CD14-positive monocyte (primary cell): ENCODE measurements at regions of chr7 and their contacts with region 1.

Region 1: GRCh38 chr7:155205368-155206317 is 92.0 kb upstream of the INSIG1 start:
- DNase-seq: peak; percentile 97 to 100 (median 98)
- H3K4me3 ChIP-seq: peak overlapping the region; percentile 30 to 64 (median 31)
- H3K4me3 Mint-ChIP-seq: peak overlapping the region; percentile 74 to 94
- H3K27ac ChIP-seq: peak overlapping the region; percentile 86 to 100
- H3K27ac Mint-ChIP-seq: peak overlapping the region; percentile 100
- H3K4me1 ChIP-seq: peaks cover 22 to 23% of the 10 kb centered on the region in 2 donors
- H3K4me1 Mint-ChIP-seq: peaks cover 22% of the 10 kb centered on the region
- H3K27me3 ChIP-seq: no peaks in the 10 kb centered on the region
- H3K27me3 Mint-ChIP-seq: peaks cover 0 to 9% (median 0%) of the 10 kb centered on the region in 3 donors
- CTCF ChIP-seq: no peak

Region 2: GRCh38 chr7:155003376-155004214 is 202.0 kb before region 1 on chr7:
- intact Hi-C with region 1: loop called in 1 of 2 experiments (anchors 10 kb)
- DNase-seq: peak; percentile 73 to 79 (median 78)
- H3K4me3 ChIP-seq: peak overlapping the region; percentile 68 to 92 (median 74)
- H3K4me3 Mint-ChIP-seq: peak overlapping the region; percentile 89 to 95
- H3K27ac ChIP-seq: peak overlapping the region in 1 of 2 donors; percentile 83
- H3K27ac Mint-ChIP-seq: peak overlapping the region; percentile 15 to 84 (median 63)
- H3K4me1 ChIP-seq: peaks cover 16 to 18% of the 10 kb centered on the region in 2 donors
- H3K4me1 Mint-ChIP-seq: peaks cover 19% of the 10 kb centered on the region
- H3K27me3 ChIP-seq: no peaks in the 10 kb centered on the region
- H3K27me3 Mint-ChIP-seq: peaks cover 0 to 2% (median 1%) of the 10 kb centered on the region in 3 donors
- CTCF ChIP-seq: no peak

Region 3: GRCh38 chr7:155257482-155258225 is 52.0 kb after region 1 on chr7:
- intact Hi-C with region 1: no loop called
- DNase-seq: no peak
- H3K4me3 ChIP-seq: no peak overlapping the region
- H3K4me3 Mint-ChIP-seq: no peak overlapping the region
- H3K27ac ChIP-seq: no peak overlapping the region
- H3K27ac Mint-ChIP-seq: no peak overlapping the region
- H3K4me1 ChIP-seq: peaks cover 0 to 6% of the 10 kb centered on the region in 2 donors
- H3K4me1 Mint-ChIP-seq: peaks cover 9% of the 10 kb centered on the region
- H3K27me3 ChIP-seq: no peaks in the 10 kb centered on the region
- H3K27me3 Mint-ChIP-seq: peaks cover 0 to 3% (median 0%) of the 10 kb centered on the region in 3 donors
- CTCF ChIP-seq: no peak

Region 4: DNA sequence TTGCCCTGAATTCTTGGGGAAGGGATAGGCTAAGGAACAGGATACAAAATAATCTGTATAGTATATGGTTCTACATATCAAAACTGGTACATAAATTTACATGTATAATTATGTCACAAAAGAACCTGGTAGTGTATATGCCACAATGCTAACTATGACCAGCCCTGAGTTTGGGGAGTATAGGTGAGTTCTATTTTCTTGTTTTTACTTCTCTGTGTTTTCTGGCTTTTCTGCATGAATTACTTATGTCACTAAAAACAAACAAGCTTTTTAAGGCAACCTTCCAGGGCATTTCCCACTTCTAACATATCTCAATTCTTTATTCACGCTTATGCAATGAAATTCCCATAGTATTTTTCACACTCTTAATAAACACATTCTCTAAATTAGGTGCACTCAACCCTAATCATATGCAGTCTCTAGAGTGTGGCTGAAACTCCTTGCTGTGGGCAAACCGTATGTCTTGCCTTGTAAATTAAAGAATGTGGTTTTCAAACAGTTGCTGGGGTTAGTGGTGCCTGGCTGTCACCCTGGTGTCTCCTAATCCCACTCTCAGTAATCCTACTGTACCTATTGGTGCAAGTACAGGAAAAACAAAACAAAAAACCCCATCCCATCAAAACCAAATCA is 78.0 kb after region 1 on chr7:
- intact Hi-C with region 1: loop called in 1 of 2 experiments (anchors 5 kb)
- DNase-seq: no peak
- H3K4me3 ChIP-seq: no peak overlapping the region
- H3K4me3 Mint-ChIP-seq: no peak overlapping the region
- H3K27ac ChIP-seq: no peak overlapping the region
- H3K27ac Mint-ChIP-seq: peak overlapping the region in 4 of 7 donors; percentile 30 to 85 (median 66)
- H3K4me1 ChIP-seq: peaks cover 30 to 32% of the 10 kb centered on the region in 2 donors
- H3K4me1 Mint-ChIP-seq: peaks cover 53% of the 10 kb centered on the region
- H3K27me3 ChIP-seq: no peaks in the 10 kb centered on the region
- H3K27me3 Mint-ChIP-seq: peaks cover 6 to 13% (median 11%) of the 10 kb centered on the region in 3 donors
- CTCF ChIP-seq: no peak

Region 5: DNA sequence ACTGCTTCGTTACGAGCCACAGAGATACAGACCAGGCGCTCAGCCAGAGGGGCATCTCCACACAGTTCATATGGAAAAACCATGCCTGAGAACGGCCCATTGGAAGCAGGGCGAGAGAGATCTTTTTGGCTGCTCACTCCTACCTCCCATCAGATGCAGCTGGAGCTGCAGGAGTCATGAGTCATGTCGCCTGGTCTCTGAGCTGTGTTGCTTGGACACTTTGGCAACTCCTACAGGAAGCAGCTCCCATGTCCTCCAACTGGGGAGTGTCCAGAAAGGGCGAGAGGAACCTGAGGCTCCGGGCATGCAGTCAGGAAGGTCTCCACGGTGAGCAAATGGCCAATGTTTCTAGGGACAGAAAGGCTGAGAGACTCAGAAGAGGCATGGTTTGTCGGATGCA is 116.9 kb after region 1 on chr7:
- intact Hi-C with region 1: no loop called
- DNase-seq: no peak
- H3K4me3 ChIP-seq: no peak overlapping the region
- H3K4me3 Mint-ChIP-seq: no peak overlapping the region
- H3K27ac ChIP-seq: no peak overlapping the region
- H3K27ac Mint-ChIP-seq: no peak overlapping the region
- H3K4me1 ChIP-seq: no peaks in the 10 kb centered on the region
- H3K4me1 Mint-ChIP-seq: no peaks in the 10 kb centered on the region
- H3K27me3 ChIP-seq: no peaks in the 10 kb centered on the region
- H3K27me3 Mint-ChIP-seq: peaks cover 0 to 14% (median 8%) of the 10 kb centered on the region in 3 donors
- CTCF ChIP-seq: no peak

Region 6: GRCh38 chr7:155356323-155357105 is 150.9 kb after region 1 on chr7:
- intact Hi-C with region 1: loop called in 1 of 2 experiments (anchors 5 kb)
- DNase-seq: peak in 2 of 3 donors; percentile 21 to 36
- H3K4me3 ChIP-seq: peak overlapping the region in 1 of 3 experiments; percentile 48
- H3K4me3 Mint-ChIP-seq: no peak overlapping the region
- H3K27ac ChIP-seq: peak overlapping the region; percentile 41 to 87
- H3K27ac Mint-ChIP-seq: peak overlapping the region; percentile 87 to 97 (median 94)
- H3K4me1 ChIP-seq: peaks cover 51 to 57% of the 10 kb centered on the region in 2 donors
- H3K4me1 Mint-ChIP-seq: peaks cover 51% of the 10 kb centered on the region
- H3K27me3 ChIP-seq: peaks cover 0 to 2% of the 10 kb centered on the region in 2 donors
- H3K27me3 Mint-ChIP-seq: peaks cover 2 to 8% (median 7%) of the 10 kb centered on the region in 3 donors
- CTCF ChIP-seq: peak; percentile 50